Naive thymus-derived CD4-positive, alpha-beta T cell (primary cell): ENCODE measurements at regions of chr3 and their contacts with region 1.

Region 1: GRCh38 chr3:156509189-156510174 is 45.4 kb downstream of the SSR3 start:
- DNase-seq: peak in 7 of 9 donors; percentile 30 to 71 (median 62)
- ATAC-seq: peak; percentile 82
- H3K4me3 ChIP-seq: no peak overlapping the region
- H3K4me3 Mint-ChIP-seq: no peak overlapping the region
- H3K27ac ChIP-seq: no peak overlapping the region
- H3K27ac Mint-ChIP-seq: no peak overlapping the region
- H3K4me1 ChIP-seq: no peaks in the 10 kb centered on the region
- H3K4me1 Mint-ChIP-seq: peaks cover 0 to 21% (median 9%) of the 10 kb centered on the region in 7 donors
- H3K27me3 ChIP-seq: no peaks in the 10 kb centered on the region
- H3K27me3 Mint-ChIP-seq: peaks cover 0 to 40% (median 17%) of the 10 kb centered on the region in 5 donors

Region 2: GRCh38 chr3:156040041-156040440 is 469.4 kb before region 1 on chr3:
- CTCF ChIA-PET with region 1: no interaction called
- POLR2A ChIA-PET with region 1: no interaction called
- intact Hi-C with region 1: loop called in 1 of 2 experiments (anchors 1 kb)
- DNase-seq: no peak
- ATAC-seq: no peak
- H3K4me3 ChIP-seq: no peak overlapping the region
- H3K4me3 Mint-ChIP-seq: no peak overlapping the region
- H3K27ac ChIP-seq: no peak overlapping the region
- H3K27ac Mint-ChIP-seq: no peak overlapping the region
- H3K4me1 ChIP-seq: no peaks in the 10 kb centered on the region
- H3K4me1 Mint-ChIP-seq: no peaks in the 10 kb centered on the region
- H3K27me3 ChIP-seq: peaks cover 0 to 3% of the 10 kb centered on the region in 2 donors
- H3K27me3 Mint-ChIP-seq: peaks cover 5 to 20% (median 12%) of the 10 kb centered on the region in 5 donors

Region 3: GRCh38 chr3:156449712-156450574 is 59.5 kb before region 1 on chr3:
- CTCF ChIA-PET with region 1: interaction called, 3 read pairs
- POLR2A ChIA-PET with region 1: no interaction called
- intact Hi-C with region 1: loop called (anchors 1 kb)
- DNase-seq: no peak
- ATAC-seq: no peak
- H3K4me3 ChIP-seq: no peak overlapping the region
- H3K4me3 Mint-ChIP-seq: no peak overlapping the region
- H3K27ac ChIP-seq: no peak overlapping the region
- H3K27ac Mint-ChIP-seq: no peak overlapping the region
- H3K4me1 ChIP-seq: no peaks in the 10 kb centered on the region
- H3K4me1 Mint-ChIP-seq: peaks cover 0 to 2% (median 0%) of the 10 kb centered on the region in 7 donors
- H3K27me3 ChIP-seq: no peaks in the 10 kb centered on the region
- H3K27me3 Mint-ChIP-seq: peaks cover 8 to 45% (median 9%) of the 10 kb centered on the region in 5 donors

Region 4: DNA sequence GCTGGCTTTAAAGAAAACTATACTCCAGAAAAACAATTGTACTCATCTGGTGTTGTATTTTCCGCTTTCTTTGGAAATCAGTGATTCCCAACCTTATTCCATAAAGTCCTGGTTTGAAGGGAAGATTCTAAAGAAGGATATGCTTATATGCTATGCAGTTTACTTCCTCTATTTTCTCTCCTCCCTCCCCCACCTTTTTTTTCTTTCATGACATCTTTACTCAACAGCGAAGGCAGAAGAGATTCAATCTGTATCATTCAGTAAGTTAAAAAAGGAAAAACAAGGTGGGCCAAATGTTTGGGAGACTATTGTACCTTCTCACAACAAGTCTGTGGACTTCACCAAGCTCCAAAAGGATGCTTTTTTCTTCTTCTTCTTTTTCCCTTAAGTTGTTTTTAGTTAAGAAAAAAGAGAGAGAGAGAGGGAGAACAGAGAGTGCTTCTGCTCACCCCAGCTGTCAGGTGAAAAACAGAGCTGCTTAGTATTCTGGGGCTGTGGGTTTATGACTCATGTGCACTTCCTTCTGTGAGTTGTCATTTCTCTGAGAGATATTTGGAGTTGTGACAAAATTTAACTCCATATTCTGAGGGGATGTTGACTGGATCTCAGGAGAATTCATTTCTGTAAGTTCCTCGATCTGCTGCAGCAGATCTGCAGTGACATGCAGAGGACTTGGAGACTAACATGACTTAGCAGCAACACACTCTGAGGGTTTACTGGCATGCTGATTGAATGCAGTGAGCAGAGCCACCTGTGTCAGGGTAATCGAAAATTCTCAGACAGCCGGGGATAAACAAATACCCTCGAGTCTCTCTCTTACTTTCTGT is 25.3 kb before region 1 on chr3:
- CTCF ChIA-PET with region 1: interaction called, 24 read pairs
- POLR2A ChIA-PET with region 1: interaction called, 4 read pairs
- intact Hi-C with region 1: loop called (anchors 1 kb)
- DNase-seq: peak in 8 of 9 donors; percentile 35 to 68 (median 62)
- ATAC-seq: peak; percentile 88
- H3K4me3 ChIP-seq: peak overlapping the region; percentile 47
- H3K4me3 Mint-ChIP-seq: peak overlapping the region; percentile 52 to 85 (median 74)
- H3K27ac ChIP-seq: peak overlapping the region; percentile 63
- H3K27ac Mint-ChIP-seq: peak overlapping the region; percentile 76 to 95 (median 83)
- H3K4me1 ChIP-seq: peaks cover 21 to 25% of the 10 kb centered on the region in 2 donors
- H3K4me1 Mint-ChIP-seq: peaks cover 14 to 40% (median 35%) of the 10 kb centered on the region in 7 donors
- H3K27me3 ChIP-seq: no peaks in the 10 kb centered on the region
- H3K27me3 Mint-ChIP-seq: peaks cover 0 to 17% (median 0%) of the 10 kb centered on the region in 5 donors

Region 5: DNA sequence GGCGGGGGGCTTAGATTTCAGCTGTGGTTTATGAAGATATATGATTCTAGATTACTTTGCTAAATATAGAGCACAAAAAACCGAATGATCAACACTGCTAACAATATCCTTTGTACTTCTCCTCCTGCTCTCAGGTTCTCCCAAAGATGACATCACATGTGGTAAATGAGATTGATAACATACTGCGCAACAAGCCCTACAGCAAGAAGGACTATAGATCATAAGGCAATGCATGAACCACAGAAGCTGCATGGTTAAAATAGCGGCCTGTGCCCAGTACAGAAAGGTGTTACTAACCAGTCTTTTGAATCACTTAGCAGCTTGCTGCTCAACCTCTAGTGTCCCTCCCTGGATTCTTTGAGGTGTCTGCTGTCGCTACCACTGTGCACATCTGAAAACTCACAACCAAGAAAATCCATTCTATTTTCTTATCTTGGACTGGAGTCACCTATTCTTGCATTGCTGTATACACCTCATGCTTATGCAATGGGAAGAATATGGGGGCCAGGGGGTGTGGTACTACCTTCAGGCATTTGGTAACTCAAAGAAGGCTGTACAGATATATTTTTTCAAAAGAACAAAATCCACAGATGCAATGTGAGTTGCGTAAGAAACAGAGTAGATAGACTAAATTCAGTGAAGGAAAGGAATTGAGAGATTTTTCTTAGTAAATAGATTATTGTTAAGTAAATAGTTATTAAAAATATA is 27.2 kb after region 1 on chr3:
- CTCF ChIA-PET with region 1: interaction called, 4 read pairs
- POLR2A ChIA-PET with region 1: no interaction called
- intact Hi-C with region 1: loop called (anchors 1 kb)
- DNase-seq: no peak
- ATAC-seq: no peak
- H3K4me3 ChIP-seq: no peak overlapping the region
- H3K4me3 Mint-ChIP-seq: no peak overlapping the region
- H3K27ac ChIP-seq: no peak overlapping the region
- H3K27ac Mint-ChIP-seq: no peak overlapping the region
- H3K4me1 ChIP-seq: no peaks in the 10 kb centered on the region
- H3K4me1 Mint-ChIP-seq: peaks cover 0 to 14% (median 0%) of the 10 kb centered on the region in 7 donors
- H3K27me3 ChIP-seq: no peaks in the 10 kb centered on the region
- H3K27me3 Mint-ChIP-seq: no peaks in the 10 kb centered on the region